Activated CD4-positive, alpha-beta T cell treated with anti-CD3 and anti-CD28 coated beads for 36 hours (primary cell): ENCODE measurements at regions of chr1 and their contacts with region 1.

Region 1: DNA sequence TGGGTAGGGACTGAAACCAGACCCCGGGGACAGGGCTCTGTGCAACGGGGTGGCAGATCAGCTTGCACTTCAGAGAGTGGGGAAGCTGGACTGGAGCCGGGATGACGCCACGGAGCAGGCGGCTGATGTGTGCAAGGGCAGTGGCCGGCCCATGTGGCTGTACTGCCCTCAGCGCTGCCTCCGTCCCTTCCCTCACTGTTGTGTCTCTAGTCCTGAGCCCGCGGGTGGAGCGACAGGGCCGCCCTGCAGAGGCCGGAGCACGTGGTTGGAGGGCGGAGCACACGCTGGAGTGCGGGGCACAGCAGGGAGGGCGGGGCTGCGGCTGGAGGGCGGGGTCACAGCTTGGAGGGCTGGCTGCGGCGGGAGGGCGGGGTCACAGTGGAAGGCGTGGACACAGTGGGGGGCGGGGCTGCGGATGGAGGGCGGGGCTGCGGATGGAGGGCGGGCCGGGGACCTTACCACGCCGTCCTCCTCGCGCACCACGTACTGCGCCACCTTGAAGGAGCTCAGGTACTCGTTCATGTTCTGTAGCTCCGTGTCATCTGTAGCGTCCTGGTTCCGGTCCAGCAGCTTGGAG is 52.4 kb downstream of the CHD5 start:
- DNase-seq: peak; percentile 91
- ATAC-seq: peak; percentile 97
- H3K4me3 Mint-ChIP-seq: no peak overlapping the region
- H3K27ac Mint-ChIP-seq: no peak overlapping the region
- H3K4me1 Mint-ChIP-seq: peaks cover 5% of the 10 kb centered on the region
- H3K27me3 Mint-ChIP-seq: peaks cover 3% of the 10 kb centered on the region

Region 2: DNA sequence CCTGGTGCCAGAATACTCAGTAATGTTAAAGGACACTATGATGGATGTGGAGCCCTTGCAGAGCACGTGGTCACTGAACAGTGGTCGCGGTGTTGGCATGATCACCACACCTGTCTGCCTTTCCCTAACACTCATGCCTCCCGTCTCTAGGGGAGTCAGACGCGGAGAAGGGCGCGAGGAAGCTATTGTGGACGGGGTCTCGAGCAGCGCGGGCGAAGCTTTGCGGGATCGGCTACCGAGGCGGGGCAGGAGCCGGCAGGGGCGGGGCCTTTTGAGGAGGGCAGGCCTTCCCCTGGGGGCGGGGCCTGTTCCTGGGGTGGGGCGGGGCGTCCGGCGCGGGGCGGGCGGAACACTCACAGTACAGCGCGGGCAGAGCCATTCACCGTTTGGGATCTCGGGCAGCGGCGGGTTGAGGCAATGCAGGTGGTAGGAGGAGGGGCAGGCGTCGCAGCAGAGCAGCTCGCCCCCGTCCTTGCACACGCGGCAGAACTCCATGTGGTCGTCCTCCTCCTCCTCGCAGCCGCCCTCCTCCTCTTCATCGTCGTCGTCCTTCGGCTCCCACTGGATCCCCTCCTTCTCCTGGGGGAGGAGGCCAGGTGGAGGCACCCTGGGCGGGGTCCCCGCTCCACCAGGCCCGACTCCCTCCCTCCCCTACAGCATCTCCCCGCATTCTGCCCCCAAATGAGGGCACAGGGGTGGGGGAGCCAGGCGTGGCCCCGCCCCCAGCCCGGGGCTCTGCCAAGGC is 21.0 kb after region 1 on chr1:
- CTCF ChIA-PET with region 1: no interaction called
- POLR2A ChIA-PET with region 1: no interaction called
- intact Hi-C with region 1: loop called in 1 of 2 experiments (anchors 1 kb)
- DNase-seq: peak; percentile 90
- ATAC-seq: peak; percentile 98
- H3K4me3 Mint-ChIP-seq: peak overlapping the region; percentile 28
- H3K27ac Mint-ChIP-seq: no peak overlapping the region
- H3K4me1 Mint-ChIP-seq: peaks cover 5% of the 10 kb centered on the region
- H3K27me3 Mint-ChIP-seq: peaks cover 7% of the 10 kb centered on the region